ENCODE measurements at regions of chr15 and their contacts with region 1.

Region 1: DNA sequence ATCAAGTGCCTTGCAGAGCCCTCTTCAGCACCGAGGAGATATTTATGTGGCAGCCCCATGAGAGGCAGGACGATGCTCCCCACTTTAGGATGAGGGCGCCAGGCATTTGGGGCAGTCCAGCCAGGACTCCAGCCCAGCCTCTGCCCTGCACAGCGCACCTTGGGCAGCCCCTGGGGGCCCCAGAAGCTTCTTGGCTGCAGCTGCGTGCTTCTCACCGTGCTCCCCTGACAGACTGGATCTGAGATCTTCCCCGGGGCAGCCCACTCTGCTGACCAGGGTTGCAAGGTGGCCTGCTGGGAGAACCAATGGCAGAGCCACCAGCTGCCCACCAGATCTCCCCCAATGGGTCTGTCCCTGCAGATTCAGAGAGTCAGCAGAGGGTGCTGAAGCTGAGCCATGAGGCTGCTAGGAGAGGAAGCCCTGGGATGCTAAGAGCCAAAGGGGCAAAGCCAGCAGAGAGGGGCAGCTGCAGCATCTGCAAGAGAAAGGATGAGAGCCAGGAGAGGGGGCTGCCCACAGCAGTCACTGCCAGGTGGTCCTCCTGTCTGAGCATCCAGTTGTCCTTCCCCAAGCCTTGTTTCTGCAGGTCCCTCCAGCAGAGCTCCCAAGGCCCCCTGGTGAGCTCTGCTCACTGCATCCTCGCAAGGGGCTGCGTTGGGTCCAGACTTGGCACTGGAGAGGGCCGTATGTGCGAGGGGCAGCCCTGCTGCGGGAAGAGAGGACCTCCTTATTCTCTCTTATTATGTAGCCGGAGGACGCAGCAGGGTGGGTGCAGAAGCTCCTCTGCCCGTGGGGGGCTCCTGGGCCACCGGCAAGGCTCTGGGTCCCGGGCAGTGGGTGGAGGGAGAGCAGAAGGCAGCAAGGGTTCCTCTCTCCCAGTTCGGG is 14.7 kb upstream of the KLF13 start:
- DNase-seq: no peak
- ATAC-seq: no peak
- H3K4me3 ChIP-seq: no peak overlapping the region
- H3K27ac ChIP-seq: no peak overlapping the region
- H3K4me1 ChIP-seq: no peaks in the 10 kb centered on the region
- H3K27me3 ChIP-seq: peaks cover 33% of the 10 kb centered on the region
- CTCF ChIP-seq: no peak
- POLR2A ChIP-seq: no peak
- RAD21 ChIP-seq: no peak

Region 2: GRCh38 chr15:31200735-31201151 is 111.2 kb before region 1 on chr15:
- CTCF ChIA-PET with region 1: no interaction called
- POLR2A ChIA-PET with region 1: no interaction called
- dilution Hi-C with region 1: no loop called
- in situ Hi-C with region 1: loop called (anchors 10 kb)
- intact Hi-C with region 1: no loop called
- DNase-seq: peak; percentile 39
- ATAC-seq: peak; percentile 77
- H3K4me3 ChIP-seq: no peak overlapping the region
- H3K27ac ChIP-seq: no peak overlapping the region
- H3K4me1 ChIP-seq: no peaks in the 10 kb centered on the region
- H3K27me3 ChIP-seq: peaks cover 39% of the 10 kb centered on the region
- CTCF ChIP-seq: peak; percentile 43
- POLR2A ChIP-seq: no peak
- RAD21 ChIP-seq: peak; percentile 60

Measured in IMR-90 (cell line).